A549 (cell line): ENCODE measurements at regions of chr2 and their contacts with region 1.

Region 1: GRCh38 chr2:38750891-38751595 is at the start of gene SRSF7:
- DNase-seq: peak; percentile 99 to 100
- ATAC-seq: peak; percentile 87 to 90
- H3K4me3 ChIP-seq: peak within 1 kb of the TSS; percentile 84
- H3K27ac ChIP-seq: peak within 1 kb of the TSS; percentile 96 to 98
- H3K4me1 ChIP-seq: peaks cover 40% of the 10 kb centered on the region
- CTCF ChIP-seq: no peak
- EP300 ChIP-seq: no peak
- POLR2A ChIP-seq: peak; percentile 100
- RAD21 ChIP-seq: 0 out of 5 replicates have a peak, but pooled peaks of 1 of the 2 experiments have one; percentile 17
- polyA plus RNA-seq, gene SRSF7: 356 and 544 TPM in 2 replicates

Region 2: DNA sequence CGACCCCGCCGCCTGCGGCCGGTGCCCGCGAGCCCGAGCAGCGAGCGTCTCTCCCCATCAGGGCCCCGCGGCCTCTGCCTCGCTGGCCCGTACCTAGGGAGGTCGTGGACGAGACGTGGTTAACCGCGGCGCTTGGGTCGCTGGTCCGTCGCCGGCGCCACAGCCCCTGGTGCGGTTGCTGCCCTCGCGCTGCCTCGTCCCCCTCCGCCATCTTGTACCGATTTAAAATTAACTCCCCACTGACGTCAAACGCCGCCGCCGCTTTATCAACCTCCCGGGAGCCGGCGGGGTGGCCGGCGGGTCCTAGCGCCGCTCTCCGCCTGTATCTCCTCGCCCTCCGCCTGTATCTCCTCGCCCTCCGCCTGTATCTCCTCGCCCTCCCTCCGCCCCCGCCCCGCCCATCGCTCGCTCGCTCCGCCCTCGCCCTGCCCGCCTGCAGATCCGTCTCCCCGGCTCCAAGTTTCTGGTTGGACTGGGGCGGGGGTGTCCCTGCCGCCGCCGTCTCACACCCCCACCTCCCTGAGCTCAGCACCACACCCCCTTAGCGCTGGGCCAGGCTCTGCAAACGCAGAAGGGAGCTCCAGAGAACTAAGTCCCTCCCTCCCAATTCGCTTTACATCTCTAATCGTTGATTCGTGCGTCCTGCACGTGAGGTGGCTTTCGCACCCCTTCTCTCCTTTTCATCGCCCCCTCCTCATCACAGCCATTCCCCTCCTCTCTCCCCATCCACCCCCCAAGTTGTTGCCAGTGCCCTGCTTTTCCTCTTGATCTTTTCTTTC is 373.8 kb before region 1 on chr2 and contains the start of gene ATL2:
- CTCF ChIA-PET with region 1: no interaction called
- POLR2A ChIA-PET with region 1: interaction called, 14 read pairs
- DNase-seq: peak; percentile 90 to 96
- ATAC-seq: peak; percentile 92
- H3K4me3 ChIP-seq: peak within 1 kb of the TSS; percentile 84
- H3K27ac ChIP-seq: peak within 1 kb of the TSS; percentile 97 to 98
- H3K4me1 ChIP-seq: peaks cover 22% of the 10 kb centered on the region
- CTCF ChIP-seq: no peak
- EP300 ChIP-seq: no peak
- POLR2A ChIP-seq: peak; percentile 89
- RAD21 ChIP-seq: no peak
- polyA plus RNA-seq, gene ATL2: 75.1 and 85.3 TPM in 2 replicates

Region 3: GRCh38 chr2:38572167-38572566 is 178.9 kb before region 1 on chr2:
- CTCF ChIA-PET with region 1: no interaction called
- POLR2A ChIA-PET with region 1: interaction called, 10 read pairs
- DNase-seq: no peak
- ATAC-seq: no peak
- H3K4me3 ChIP-seq: no peak overlapping the region
- H3K27ac ChIP-seq: no peak overlapping the region
- H3K4me1 ChIP-seq: 0 out of 3 replicates have a peak, but pooled peaks cover 3% of the 10 kb centered on the region
- CTCF ChIP-seq: no peak
- EP300 ChIP-seq: no peak
- POLR2A ChIP-seq: no peak
- RAD21 ChIP-seq: no peak

Region 4: DNA sequence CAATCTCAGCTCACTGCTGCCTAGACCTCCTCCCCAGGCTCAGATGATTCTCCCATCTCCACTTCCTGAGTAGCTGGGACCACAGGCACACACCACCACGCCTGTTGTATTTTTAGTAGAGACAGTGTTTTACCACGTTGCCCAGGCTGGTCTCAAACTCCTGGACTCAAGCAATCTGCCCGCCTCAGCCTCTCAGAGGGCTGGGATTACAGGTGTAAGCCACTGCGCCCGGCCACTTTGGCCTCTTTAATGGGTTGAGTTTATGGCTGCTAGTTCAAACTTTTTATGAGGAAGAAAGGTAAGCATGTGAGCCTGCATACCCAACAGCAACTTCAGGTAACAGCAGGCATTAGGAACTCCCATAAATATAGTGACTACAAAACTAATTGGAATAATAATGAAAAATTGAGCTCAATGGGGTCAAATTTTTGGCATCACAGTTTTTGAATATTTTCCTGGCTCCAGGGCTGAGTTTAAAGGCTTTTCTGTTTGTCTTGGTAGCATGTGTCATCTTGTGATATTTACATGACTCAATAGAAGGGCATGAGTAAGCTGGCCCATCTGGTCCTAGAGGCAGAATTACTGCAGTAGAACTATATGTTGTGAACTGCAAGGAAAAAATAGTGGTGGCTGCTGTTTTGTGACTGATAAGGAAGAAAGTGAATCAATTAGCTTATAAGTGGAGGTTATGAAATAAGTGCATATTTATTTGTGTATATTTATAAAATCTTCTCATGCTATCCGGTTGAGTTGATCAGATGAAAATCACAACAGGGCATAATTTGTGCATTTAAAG is 60.3 kb before region 1 on chr2:
- CTCF ChIA-PET with region 1: interaction called, 4 read pairs
- POLR2A ChIA-PET with region 1: interaction called, 25 read pairs
- DNase-seq: peak; percentile 88 to 99
- ATAC-seq: peak; percentile 98 to 99
- H3K4me3 ChIP-seq: 0 out of 3 replicates have a peak overlapping the region, but pooled peaks have one; percentile 5
- H3K27ac ChIP-seq: peak overlapping the region; percentile 90 to 93
- H3K4me1 ChIP-seq: peaks cover 63% of the 10 kb centered on the region
- CTCF ChIP-seq: no peak
- EP300 ChIP-seq: peak; percentile 73 to 84; a peak in 2 of 5 replicates
- POLR2A ChIP-seq: no peak
- RAD21 ChIP-seq: peak; percentile 34 to 52

Region 5: GRCh38 chr2:38791744-38792143 is 40.7 kb after region 1 on chr2:
- CTCF ChIA-PET with region 1: no interaction called
- POLR2A ChIA-PET with region 1: interaction called, 38 read pairs
- DNase-seq: no peak
- ATAC-seq: no peak
- H3K4me3 ChIP-seq: no peak overlapping the region
- H3K27ac ChIP-seq: no peak overlapping the region
- H3K4me1 ChIP-seq: peaks cover 14% of the 10 kb centered on the region
- CTCF ChIP-seq: no peak
- EP300 ChIP-seq: no peak
- POLR2A ChIP-seq: no peak
- RAD21 ChIP-seq: no peak

Region 6: DNA sequence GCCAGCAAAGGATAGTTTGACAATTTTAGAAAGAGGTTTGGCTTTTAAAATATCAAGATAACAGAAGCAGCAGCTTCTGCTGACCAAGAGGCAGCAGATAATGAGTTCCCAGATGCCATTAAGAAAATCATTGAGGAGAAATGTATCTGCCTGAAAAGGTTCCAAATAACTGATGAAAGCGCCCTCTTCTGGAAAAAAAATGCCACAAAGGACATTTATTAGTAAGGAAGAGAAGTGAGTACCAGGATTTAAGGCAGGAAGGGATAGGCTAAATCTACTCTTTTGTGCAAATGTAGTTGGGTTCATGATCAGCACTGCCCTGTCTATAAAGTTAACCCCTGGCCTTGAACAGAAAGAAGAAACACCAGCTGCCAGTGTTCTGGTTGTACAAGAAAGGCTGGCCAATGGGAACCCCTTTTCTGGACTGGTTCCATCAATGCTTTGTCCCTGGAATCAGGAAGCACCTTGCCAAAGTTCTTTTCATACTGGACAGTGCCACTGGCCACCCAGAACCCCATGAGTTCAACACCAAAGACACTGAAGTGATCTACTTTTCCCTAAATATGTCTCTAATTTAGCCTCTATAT is 84.1 kb after region 1 on chr2:
- CTCF ChIA-PET with region 1: interaction called, 4 read pairs
- POLR2A ChIA-PET with region 1: interaction called, 12 read pairs
- DNase-seq: peak in 1 of 2 experiments; percentile 55
- ATAC-seq: peak in 1 of 2 experiments; percentile 77; a peak in 3 of 6 replicates
- H3K4me3 ChIP-seq: no peak overlapping the region
- H3K27ac ChIP-seq: no peak overlapping the region
- H3K4me1 ChIP-seq: no peaks in the 10 kb centered on the region
- CTCF ChIP-seq: peak; percentile 68
- EP300 ChIP-seq: no peak
- POLR2A ChIP-seq: no peak
- RAD21 ChIP-seq: peak; percentile 53 to 61

Region 7: GRCh38 chr2:38959938-38960608 is 209.0 kb after region 1 on chr2:
- CTCF ChIA-PET with region 1: no interaction called
- POLR2A ChIA-PET with region 1: no interaction called
- DNase-seq: no peak
- ATAC-seq: no peak
- H3K4me3 ChIP-seq: no peak overlapping the region
- H3K27ac ChIP-seq: no peak overlapping the region
- H3K4me1 ChIP-seq: no peaks in the 10 kb centered on the region
- CTCF ChIP-seq: no peak
- EP300 ChIP-seq: no peak
- POLR2A ChIP-seq: no peak
- RAD21 ChIP-seq: no peak

Region 8: GRCh38 chr2:39107156-39107555 is 356.1 kb after region 1 on chr2:
- CTCF ChIA-PET with region 1: no interaction called
- POLR2A ChIA-PET with region 1: no interaction called
- DNase-seq: peak in 1 of 2 experiments; percentile 26
- ATAC-seq: peak; percentile 84 to 89
- H3K4me3 ChIP-seq: no peak overlapping the region
- H3K27ac ChIP-seq: 0 out of 6 replicates have a peak overlapping the region, but pooled peaks of 1 of the 2 experiments have one; percentile 9
- H3K4me1 ChIP-seq: peaks cover 15% of the 10 kb centered on the region
- CTCF ChIP-seq: no peak
- EP300 ChIP-seq: no peak
- POLR2A ChIP-seq: no peak
- RAD21 ChIP-seq: no peak